PC-3 (cell line): ENCODE measurements at regions of chr1 and their contacts with region 1.

Region 1: GRCh38 chr1:193104906-193105820 is at the start of gene GLRX2:
- DNase-seq: peak; percentile 72
- ATAC-seq: peak; percentile 90
- H3K4me3 ChIP-seq: peak within 1 kb of the TSS; percentile 86
- H3K27ac ChIP-seq: peak within 1 kb of the TSS; percentile 85
- H3K4me1 ChIP-seq: peaks cover 15% of the 10 kb centered on the region
- H3K27me3 ChIP-seq: no peaks in the 10 kb centered on the region
- CTCF ChIP-seq: no peak
- total RNA-seq, gene GLRX2: 16.5 and 18.6 TPM in 2 replicates

Region 2: GRCh38 chr1:193059268-193060225 is 45.6 kb before region 1 on chr1 and contains the starts of genes RO60 and UCHL5:
- CTCF ChIA-PET with region 1: interaction called, 4 read pairs
- POLR2A ChIA-PET with region 1: interaction called, 9 read pairs
- intact Hi-C with region 1: loop called (anchors 2 kb)
- DNase-seq: peak; percentile 95
- ATAC-seq: peak; percentile 89
- H3K4me3 ChIP-seq: peak within 1 kb of the TSS; percentile 87
- H3K27ac ChIP-seq: peak within 1 kb of the TSS; percentile 86
- H3K4me1 ChIP-seq: peaks cover 42% of the 10 kb centered on the region
- H3K27me3 ChIP-seq: no peaks in the 10 kb centered on the region
- CTCF ChIP-seq: no peak
- total RNA-seq, gene RO60: 37.9 and 45.4 TPM in 2 replicates
- total RNA-seq, gene UCHL5: 31.3 and 32.3 TPM in 2 replicates

Region 3: GRCh38 chr1:193121616-193122593 is 16.7 kb after region 1 on chr1 and contains the start of gene CDC73:
- CTCF ChIA-PET with region 1: interaction called, 7 read pairs
- POLR2A ChIA-PET with region 1: no interaction called
- intact Hi-C with region 1: loop called (anchors 1 kb)
- DNase-seq: peak; percentile 94
- ATAC-seq: peak; percentile 94
- H3K4me3 ChIP-seq: peak within 1 kb of the TSS; percentile 81
- H3K27ac ChIP-seq: peak within 1 kb of the TSS; percentile 81
- H3K4me1 ChIP-seq: peaks cover 19% of the 10 kb centered on the region
- H3K27me3 ChIP-seq: no peaks in the 10 kb centered on the region
- CTCF ChIP-seq: peak; percentile 66
- total RNA-seq, gene CDC73: 10.0 and 13.4 TPM in 2 replicates

Region 4: GRCh38 chr1:193558491-193559028 is 453.4 kb after region 1 on chr1:
- CTCF ChIA-PET with region 1: no interaction called
- POLR2A ChIA-PET with region 1: interaction called, 11 read pairs
- intact Hi-C with region 1: no loop called
- DNase-seq: peak; percentile 66
- ATAC-seq: peak; percentile 94
- H3K4me3 ChIP-seq: no peak overlapping the region
- H3K27ac ChIP-seq: no peak overlapping the region
- H3K4me1 ChIP-seq: peaks cover 3% of the 10 kb centered on the region; the same call in 1 of the 2 replicates
- H3K27me3 ChIP-seq: no peaks in the 10 kb centered on the region
- CTCF ChIP-seq: no peak